RWPE1 (cell line): ENCODE measurements at regions of chr16 and their contacts with region 1.

Region 1: DNA sequence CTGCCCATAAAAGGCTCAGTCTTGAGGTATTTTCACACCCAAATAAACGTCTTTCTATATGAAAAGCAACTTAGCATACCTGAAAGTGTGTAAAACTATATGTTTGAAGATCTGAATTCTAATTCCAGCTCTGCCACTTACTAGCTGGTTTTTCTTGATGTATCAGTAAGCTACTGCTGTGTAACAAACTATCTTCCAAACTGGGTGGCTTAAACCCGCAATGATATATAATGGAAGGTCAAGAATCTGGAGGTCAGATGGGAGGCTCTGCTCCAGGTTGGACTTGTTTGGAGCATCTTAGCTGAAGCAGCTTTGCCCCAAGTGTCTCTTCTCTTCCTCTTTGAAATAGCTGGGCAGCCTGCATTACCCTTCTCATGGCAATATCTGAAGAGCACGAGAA is 164.3 kb upstream of the IRX5 start:
- DNase-seq: no peak
- H3K27ac ChIP-seq: no peak overlapping the region
- CTCF ChIP-seq: no peak

Region 2: DNA sequence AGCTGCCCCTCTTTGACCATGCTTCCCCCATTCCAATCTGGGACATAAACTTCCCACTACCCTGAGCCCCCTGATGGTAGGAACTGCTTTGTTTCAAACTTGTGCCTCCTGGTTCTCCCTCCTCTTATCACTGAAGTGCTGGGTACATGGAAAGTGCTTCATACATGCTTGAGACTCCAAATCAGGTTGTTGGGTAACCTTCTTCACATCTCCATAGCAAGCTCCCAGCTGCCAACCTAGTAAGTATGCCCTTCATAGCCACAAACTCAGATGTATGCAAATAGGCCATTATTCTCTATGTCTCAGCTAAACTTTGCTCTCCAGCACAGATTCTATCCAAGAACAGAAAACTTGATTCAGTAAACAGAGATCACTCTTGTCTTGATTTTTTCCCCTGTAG is 169.1 kb before region 1 on chr16:
- CTCF ChIA-PET with region 1: interaction called, 13 read pairs
- POLR2A ChIA-PET with region 1: no interaction called
- DNase-seq: no peak
- H3K27ac ChIP-seq: no peak overlapping the region
- CTCF ChIP-seq: no peak